ENCODE measurements at regions of chr7 and their contacts with region 1.

Region 1: GRCh38 chr7:25259587-25260243 is 31.4 kb upstream of the NPVF start:
- DNase-seq: peak; percentile 74 to 91
- H3K4me3 ChIP-seq: no peak overlapping the region
- H3K27ac ChIP-seq: no peak overlapping the region
- H3K4me1 ChIP-seq: peaks cover 0 to 22% (median 7%) of the 10 kb centered on the region in 4 donors
- H3K27me3 ChIP-seq: peaks cover 0 to 3% (median 0%) of the 10 kb centered on the region in 3 donors
- CTCF ChIP-seq: peak in 5 of 7 experiments; percentile 71 to 92 (median 86)
- EP300 ChIP-seq: no peak
- POLR2A ChIP-seq: no peak

Region 2: GRCh38 chr7:25196132-25196891 is 63.4 kb before region 1 on chr7:
- intact Hi-C with region 1: no loop called
- DNase-seq: peak; percentile 58 to 90
- H3K4me3 ChIP-seq: no peak overlapping the region
- H3K27ac ChIP-seq: peak overlapping the region; percentile 48 to 78 (median 73)
- H3K4me1 ChIP-seq: peaks cover 4 to 28% (median 7%) of the 10 kb centered on the region in 4 donors
- H3K27me3 ChIP-seq: no peaks in the 10 kb centered on the region
- CTCF ChIP-seq: no peak
- EP300 ChIP-seq: no peak
- POLR2A ChIP-seq: no peak

Region 3: GRCh38 chr7:25314094-25314730 is 54.5 kb after region 1 on chr7:
- intact Hi-C with region 1: no loop called
- DNase-seq: peak in 1 of 2 donors; percentile 44
- H3K4me3 ChIP-seq: no peak overlapping the region
- H3K27ac ChIP-seq: no peak overlapping the region
- H3K4me1 ChIP-seq: peaks cover 0 to 15% (median 7%) of the 10 kb centered on the region in 4 donors
- H3K27me3 ChIP-seq: no peaks in the 10 kb centered on the region
- CTCF ChIP-seq: no peak
- EP300 ChIP-seq: no peak
- POLR2A ChIP-seq: no peak

Region 4: GRCh38 chr7:25389489-25390106 is 129.9 kb after region 1 on chr7:
- intact Hi-C with region 1: loop called (anchors 5 kb)
- DNase-seq: peak in 1 of 2 donors; percentile 87
- H3K4me3 ChIP-seq: no peak overlapping the region
- H3K27ac ChIP-seq: peak overlapping the region in 1 of 5 donors; percentile 4
- H3K4me1 ChIP-seq: peaks cover 10 to 69% (median 21%) of the 10 kb centered on the region in 4 donors
- H3K27me3 ChIP-seq: no peaks in the 10 kb centered on the region
- CTCF ChIP-seq: peak in 5 of 7 experiments; percentile 27 to 77 (median 50)
- EP300 ChIP-seq: no peak
- POLR2A ChIP-seq: no peak

Region 5: GRCh38 chr7:25565949-25566348 is 306.2 kb after region 1 on chr7:
- intact Hi-C with region 1: loop called (anchors 5 kb)
- DNase-seq: peak; percentile 71 to 88
- H3K4me3 ChIP-seq: no peak overlapping the region
- H3K27ac ChIP-seq: peak overlapping the region in 2 of 5 donors; percentile 40 to 61
- H3K4me1 ChIP-seq: peaks cover 0 to 34% (median 19%) of the 10 kb centered on the region in 4 donors
- H3K27me3 ChIP-seq: no peaks in the 10 kb centered on the region
- CTCF ChIP-seq: peak in 6 of 7 experiments; percentile 86 to 100 (median 99)
- EP300 ChIP-seq: no peak
- POLR2A ChIP-seq: no peak

Region 6: GRCh38 chr7:25846722-25847121 is 587.0 kb after region 1 on chr7:
- intact Hi-C with region 1: loop called (anchors 10 kb)
- DNase-seq: peak; percentile 42 to 88
- H3K4me3 ChIP-seq: no peak overlapping the region
- H3K27ac ChIP-seq: peak overlapping the region in 3 of 5 donors; percentile 52 to 91 (median 77)
- H3K4me1 ChIP-seq: peaks cover 1 to 61% (median 32%) of the 10 kb centered on the region in 4 donors
- H3K27me3 ChIP-seq: peaks cover 0 to 73% (median 27%) of the 10 kb centered on the region in 3 donors
- CTCF ChIP-seq: no peak
- EP300 ChIP-seq: no peak
- POLR2A ChIP-seq: no peak

Measured in stomach (tissue), 19 donors.